Esophagus muscularis mucosa (tissue), 4 donors: ENCODE measurements at regions of chr16 and their contacts with region 1.

Region 1: GRCh38 chr16:84765616-84766580 is 53.9 kb upstream of the CRISPLD2 start:
- DNase-seq: no peak
- H3K4me3 ChIP-seq: no peak overlapping the region
- H3K27ac ChIP-seq: peak overlapping the region in 1 of 4 donors; percentile 11
- H3K4me1 ChIP-seq: peaks cover 0 to 9% (median 2%) of the 10 kb centered on the region in 4 donors
- H3K27me3 ChIP-seq: no peaks in the 10 kb centered on the region
- CTCF ChIP-seq: no peak
- EP300 ChIP-seq: no peak
- POLR2A ChIP-seq: no peak

Region 2: DNA sequence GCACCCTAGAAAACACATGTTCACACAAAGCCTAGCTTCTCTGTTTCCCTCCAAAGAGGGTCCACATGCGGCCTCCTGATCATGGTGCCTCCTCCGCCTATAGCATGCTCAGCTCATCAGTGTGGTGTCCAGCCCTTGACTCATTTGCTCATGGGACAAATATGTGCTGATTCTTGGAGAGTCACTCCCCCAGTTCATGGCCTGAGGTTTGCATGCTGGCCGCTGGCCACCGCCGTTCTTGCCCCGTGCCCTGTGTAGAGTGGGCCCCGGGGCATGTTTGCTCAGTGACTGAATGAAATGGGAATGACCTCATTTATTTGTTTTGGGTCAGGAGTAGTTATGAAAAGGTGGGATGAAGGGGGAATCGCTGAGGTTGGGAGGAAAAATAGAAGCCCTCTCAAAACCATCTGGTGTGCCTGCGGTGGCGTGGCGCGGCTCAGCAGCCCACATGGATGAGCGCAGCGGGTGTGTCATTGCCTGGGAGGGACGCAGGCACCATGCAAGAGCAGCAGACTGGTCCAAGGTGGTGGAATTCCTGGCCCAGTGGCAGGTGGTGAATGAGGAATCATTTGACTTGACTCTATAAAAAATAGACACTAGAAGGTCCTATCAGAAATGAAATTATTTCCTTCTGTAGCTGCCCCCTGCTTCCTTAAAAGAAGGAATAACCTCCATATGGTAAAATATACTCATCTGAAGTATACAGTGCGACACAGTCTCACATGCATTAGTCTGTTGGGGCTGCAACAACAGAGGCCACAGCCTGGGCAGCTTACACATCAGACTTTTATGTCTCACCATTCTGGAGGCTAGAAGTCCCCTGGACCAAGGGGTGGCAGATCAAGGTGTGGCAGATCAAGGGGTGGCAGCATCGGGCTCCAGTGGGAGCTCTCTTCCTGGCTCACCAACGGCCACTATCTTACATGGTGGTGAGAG is 85.6 kb after region 1 on chr16:
- intact Hi-C with region 1: no loop called
- DNase-seq: no peak
- H3K4me3 ChIP-seq: no peak overlapping the region
- H3K27ac ChIP-seq: peak overlapping the region in 2 of 4 donors; percentile 32 to 34
- H3K4me1 ChIP-seq: peaks cover 0 to 11% (median 2%) of the 10 kb centered on the region in 4 donors
- H3K27me3 ChIP-seq: no peaks in the 10 kb centered on the region
- CTCF ChIP-seq: no peak
- EP300 ChIP-seq: no peak
- POLR2A ChIP-seq: no peak

Region 3: GRCh38 chr16:84868829-84869472 is 103.1 kb after region 1 on chr16:
- intact Hi-C with region 1: loop called (anchors 5 kb)
- DNase-seq: no peak
- H3K4me3 ChIP-seq: no peak overlapping the region
- H3K27ac ChIP-seq: peak overlapping the region in 3 of 4 donors; percentile 16 to 49 (median 40)
- H3K4me1 ChIP-seq: peaks cover 0 to 30% (median 25%) of the 10 kb centered on the region in 4 donors
- H3K27me3 ChIP-seq: no peaks in the 10 kb centered on the region
- CTCF ChIP-seq: no peak
- EP300 ChIP-seq: no peak
- POLR2A ChIP-seq: no peak